CD4-positive, alpha-beta memory T cell (primary cell): ENCODE measurements at regions of chr13 and their contacts with region 1.

Region 1: DNA sequence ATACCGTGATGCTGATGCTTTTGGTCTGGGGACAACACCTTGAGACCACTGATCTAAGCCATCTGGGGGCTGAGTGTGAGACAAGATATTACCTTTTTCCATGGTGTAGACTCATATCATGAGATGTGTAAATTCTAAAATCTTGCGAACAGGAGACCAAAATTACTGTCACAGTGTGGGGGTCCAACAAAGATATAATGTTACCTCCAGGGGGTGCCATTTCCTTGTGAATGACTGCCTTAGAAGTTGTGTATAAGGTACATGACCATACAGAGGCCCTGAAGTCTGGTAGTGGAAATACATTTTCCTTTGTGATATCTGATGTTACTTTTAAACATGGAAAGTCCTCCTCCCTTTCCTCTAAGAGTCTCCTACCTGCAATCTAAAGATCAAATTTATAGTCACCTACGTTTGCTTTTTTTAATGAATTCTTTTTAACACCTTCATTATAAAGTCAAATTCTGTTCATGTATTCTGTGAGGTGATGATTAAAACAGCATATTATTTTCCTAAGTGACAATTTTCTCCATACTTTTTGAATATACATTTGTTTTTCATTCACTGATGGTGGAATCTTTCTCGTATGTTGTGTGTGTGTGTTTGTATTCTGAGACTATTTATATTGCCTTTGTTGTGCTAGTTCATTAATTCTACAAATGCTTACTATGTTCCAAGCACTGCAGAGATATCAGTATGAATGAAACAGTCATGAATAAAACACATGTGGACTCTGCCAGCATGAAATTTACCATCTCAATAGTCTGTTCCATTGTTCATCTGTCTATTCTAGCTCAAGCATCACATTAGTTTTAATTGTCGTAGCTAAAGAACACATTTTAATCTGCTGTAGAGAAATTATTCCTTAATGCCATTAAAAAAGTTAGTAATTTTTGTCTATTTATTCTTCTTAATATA is 113.7 kb downstream of the RFC3 start:
- DNase-seq: no peak
- H3K4me3 ChIP-seq: no peak overlapping the region
- H3K4me3 Mint-ChIP-seq: no peak overlapping the region
- H3K27ac ChIP-seq: no peak overlapping the region
- H3K27ac Mint-ChIP-seq: no peak overlapping the region
- H3K4me1 ChIP-seq: no peaks in the 10 kb centered on the region
- H3K4me1 Mint-ChIP-seq: no peaks in the 10 kb centered on the region
- H3K27me3 ChIP-seq: no peaks in the 10 kb centered on the region
- H3K27me3 Mint-ChIP-seq: no peaks in the 10 kb centered on the region

Region 2: DNA sequence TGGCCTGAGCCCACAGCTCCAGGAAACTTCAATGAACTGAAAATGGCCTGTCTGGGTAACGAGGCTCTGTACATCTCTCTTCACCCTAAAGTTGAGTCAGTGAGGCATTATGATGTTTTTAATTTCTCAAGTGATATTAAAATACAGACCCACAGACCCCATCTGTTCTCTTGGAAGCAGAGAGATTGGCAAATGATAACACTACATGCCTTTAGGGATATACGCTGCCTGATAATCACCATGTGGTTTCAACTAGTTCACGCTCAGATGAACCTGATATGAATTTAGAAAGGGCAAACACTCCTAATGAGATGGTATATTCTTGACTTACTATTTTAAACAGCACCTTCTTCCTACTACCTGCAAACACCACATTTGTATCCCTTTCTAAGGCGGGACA is 13.8 kb after region 1 on chr13:
- CTCF ChIA-PET with region 1: no interaction called
- POLR2A ChIA-PET with region 1: no interaction called
- intact Hi-C with region 1: no loop called
- DNase-seq: no peak
- H3K4me3 ChIP-seq: no peak overlapping the region
- H3K4me3 Mint-ChIP-seq: no peak overlapping the region
- H3K27ac ChIP-seq: no peak overlapping the region
- H3K27ac Mint-ChIP-seq: no peak overlapping the region
- H3K4me1 ChIP-seq: no peaks in the 10 kb centered on the region
- H3K4me1 Mint-ChIP-seq: no peaks in the 10 kb centered on the region
- H3K27me3 ChIP-seq: no peaks in the 10 kb centered on the region
- H3K27me3 Mint-ChIP-seq: no peaks in the 10 kb centered on the region

Region 3: DNA sequence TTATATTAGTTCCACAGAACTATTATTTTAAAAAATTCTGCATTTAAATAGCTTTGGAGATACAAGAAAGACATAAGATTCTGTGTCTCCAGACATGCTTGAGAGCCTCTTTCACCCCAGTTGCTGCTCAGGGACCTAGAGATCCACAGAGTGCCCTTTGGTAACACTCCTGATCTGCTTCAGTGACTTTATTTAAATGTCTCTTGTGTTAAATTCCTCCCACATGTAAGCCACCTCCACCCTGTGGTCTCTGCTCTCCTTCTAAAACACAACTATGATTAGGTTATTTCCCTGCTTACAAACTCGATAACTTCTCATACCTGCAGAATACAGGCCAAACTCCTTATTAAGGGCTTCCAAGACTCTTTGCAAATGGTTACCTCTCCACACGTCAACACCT is 27.3 kb after region 1 on chr13:
- CTCF ChIA-PET with region 1: no interaction called
- POLR2A ChIA-PET with region 1: no interaction called
- intact Hi-C with region 1: no loop called
- DNase-seq: no peak
- H3K4me3 ChIP-seq: no peak overlapping the region
- H3K4me3 Mint-ChIP-seq: no peak overlapping the region
- H3K27ac ChIP-seq: no peak overlapping the region
- H3K27ac Mint-ChIP-seq: no peak overlapping the region
- H3K4me1 ChIP-seq: no peaks in the 10 kb centered on the region
- H3K4me1 Mint-ChIP-seq: no peaks in the 10 kb centered on the region
- H3K27me3 ChIP-seq: no peaks in the 10 kb centered on the region
- H3K27me3 Mint-ChIP-seq: no peaks in the 10 kb centered on the region

Region 4: GRCh38 chr13:34025746-34026145 is 94.1 kb after region 1 on chr13:
- CTCF ChIA-PET with region 1: no interaction called
- POLR2A ChIA-PET with region 1: no interaction called
- intact Hi-C with region 1: no loop called
- DNase-seq: no peak
- H3K4me3 ChIP-seq: no peak overlapping the region
- H3K4me3 Mint-ChIP-seq: no peak overlapping the region
- H3K27ac ChIP-seq: no peak overlapping the region
- H3K27ac Mint-ChIP-seq: no peak overlapping the region
- H3K4me1 ChIP-seq: no peaks in the 10 kb centered on the region
- H3K4me1 Mint-ChIP-seq: no peaks in the 10 kb centered on the region
- H3K27me3 ChIP-seq: no peaks in the 10 kb centered on the region
- H3K27me3 Mint-ChIP-seq: peaks cover 2% of the 10 kb centered on the region in 2 donors

Region 5: DNA sequence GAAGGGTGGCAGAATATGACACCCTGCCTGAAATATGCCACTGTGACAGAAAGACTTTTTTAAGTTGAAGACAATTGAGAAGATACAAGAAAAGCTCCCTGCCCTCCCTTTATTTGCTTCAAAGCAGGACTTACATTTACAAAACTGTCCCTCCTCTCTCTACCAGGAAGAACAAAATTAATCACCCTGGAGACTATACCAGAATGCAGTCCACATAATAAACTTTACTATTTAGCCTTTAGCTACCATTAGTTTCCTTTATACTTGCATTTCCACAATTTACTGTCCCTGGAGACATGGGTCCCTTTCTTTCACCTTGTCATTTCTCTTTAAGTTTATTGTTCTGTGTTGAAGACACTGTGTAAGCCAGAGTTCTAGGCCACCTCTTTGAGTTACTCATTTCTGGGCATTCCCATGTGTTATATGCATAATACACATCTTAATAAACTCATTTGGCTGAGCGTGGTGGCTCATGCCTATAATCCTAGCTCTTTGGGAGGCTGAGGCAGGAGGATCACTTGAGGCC is 125.1 kb after region 1 on chr13:
- CTCF ChIA-PET with region 1: no interaction called
- POLR2A ChIA-PET with region 1: no interaction called
- intact Hi-C with region 1: no loop called
- DNase-seq: no peak
- H3K4me3 ChIP-seq: no peak overlapping the region
- H3K4me3 Mint-ChIP-seq: no peak overlapping the region
- H3K27ac ChIP-seq: no peak overlapping the region
- H3K27ac Mint-ChIP-seq: no peak overlapping the region
- H3K4me1 ChIP-seq: no peaks in the 10 kb centered on the region
- H3K4me1 Mint-ChIP-seq: no peaks in the 10 kb centered on the region
- H3K27me3 ChIP-seq: no peaks in the 10 kb centered on the region
- H3K27me3 Mint-ChIP-seq: no peaks in the 10 kb centered on the region

Region 6: DNA sequence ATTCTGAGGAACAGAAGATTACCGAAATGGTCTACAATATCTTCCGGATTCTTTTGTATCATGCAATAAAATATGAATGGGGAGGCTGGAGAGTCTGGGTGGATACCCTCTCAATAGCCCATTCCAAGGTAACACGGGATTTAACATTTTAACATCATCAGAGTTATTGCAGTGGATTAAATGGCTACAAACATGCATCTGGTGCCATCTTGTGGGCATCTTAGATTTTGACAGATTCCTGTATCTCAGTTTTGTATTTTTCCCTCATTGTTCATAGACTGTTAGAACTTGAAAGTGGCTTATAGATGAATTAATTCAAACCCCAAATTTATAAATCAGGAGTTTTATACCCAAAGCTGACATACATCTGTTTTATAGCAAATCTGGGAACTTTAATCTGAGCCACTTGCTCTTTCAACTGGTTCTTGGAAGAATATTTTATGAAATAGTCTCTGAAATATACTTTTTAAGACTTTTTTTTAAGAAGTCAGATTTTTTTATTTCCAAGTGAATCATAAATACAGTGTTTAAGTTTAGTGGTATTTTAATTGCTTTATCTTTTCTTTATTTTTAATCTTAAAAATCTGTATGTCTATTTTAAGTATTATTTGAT is 1225.6 kb after region 1 on chr13:
- CTCF ChIA-PET with region 1: no interaction called
- POLR2A ChIA-PET with region 1: no interaction called
- intact Hi-C with region 1: loop called (anchors 5 kb)
- DNase-seq: peak in 3 of 5 donors; percentile 5 to 15 (median 11)
- H3K4me3 ChIP-seq: no peak overlapping the region
- H3K4me3 Mint-ChIP-seq: no peak overlapping the region
- H3K27ac ChIP-seq: no peak overlapping the region
- H3K27ac Mint-ChIP-seq: no peak overlapping the region
- H3K4me1 ChIP-seq: no peaks in the 10 kb centered on the region
- H3K4me1 Mint-ChIP-seq: peaks cover 0 to under 1% (median under 1%) of the 10 kb centered on the region in 4 donors
- H3K27me3 ChIP-seq: no peaks in the 10 kb centered on the region
- H3K27me3 Mint-ChIP-seq: no peaks in the 10 kb centered on the region